ENCODE measurements at regions of chr10 and their contacts with region 1.

Region 1: GRCh38 chr10:35218339-35218955 is 91.8 kb downstream of the CREM start:
- DNase-seq: peak; percentile 61 to 92 (median 80)
- ATAC-seq: peak; percentile 90
- H3K4me3 ChIP-seq: no peak overlapping the region
- H3K4me3 Mint-ChIP-seq: no peak overlapping the region
- H3K27ac ChIP-seq: no peak overlapping the region
- H3K27ac Mint-ChIP-seq: no peak overlapping the region
- H3K4me1 ChIP-seq: peaks cover 3% of the 10 kb centered on the region
- H3K4me1 Mint-ChIP-seq: peaks cover 7% of the 10 kb centered on the region
- H3K27me3 ChIP-seq: no peaks in the 10 kb centered on the region
- H3K27me3 Mint-ChIP-seq: peaks cover 12% of the 10 kb centered on the region
- CTCF ChIP-seq: peak; percentile 94

Region 2: DNA sequence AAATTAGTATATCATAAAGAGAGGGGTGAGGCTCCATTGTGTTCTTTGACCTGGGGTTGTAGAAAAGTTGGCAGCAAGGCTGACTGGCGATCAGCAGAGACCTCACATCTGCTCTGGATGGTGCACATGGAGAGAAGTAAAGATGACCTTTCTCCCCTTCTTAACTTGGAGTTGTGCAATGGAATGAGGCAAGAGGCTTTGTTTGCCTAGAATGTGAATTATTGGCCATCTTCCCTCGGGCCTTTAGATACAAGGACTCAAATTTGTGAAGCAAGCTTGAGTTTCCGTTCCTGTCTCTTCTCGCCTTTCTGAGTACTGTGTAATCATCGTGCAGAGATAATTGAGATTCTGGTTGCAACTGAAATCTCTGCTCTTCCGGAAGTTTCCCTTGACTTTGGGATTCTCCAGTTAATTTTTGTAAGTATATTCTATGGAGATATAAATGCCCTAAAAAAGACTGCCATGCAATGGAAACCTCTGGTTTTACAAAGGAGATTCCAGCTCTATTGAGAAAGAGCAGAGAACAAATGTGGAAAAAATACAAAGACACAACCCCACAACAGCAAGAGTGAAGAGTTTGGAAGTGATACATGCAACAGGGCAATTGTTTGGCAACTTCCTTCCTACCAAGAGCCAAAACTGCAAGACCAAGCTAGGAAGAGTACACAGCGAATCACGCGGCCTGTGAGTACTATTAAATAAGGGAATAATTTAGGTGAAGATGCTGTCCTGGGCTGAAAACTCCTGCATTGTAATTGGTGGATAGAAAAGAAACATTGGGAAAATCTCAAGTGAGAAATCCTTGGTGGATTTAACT is 1341.7 kb before region 1 on chr10:
- CTCF ChIA-PET with region 1: no interaction called
- POLR2A ChIA-PET with region 1: no interaction called
- intact Hi-C with region 1: no loop called
- DNase-seq: no peak
- ATAC-seq: no peak
- H3K4me3 ChIP-seq: no peak overlapping the region
- H3K4me3 Mint-ChIP-seq: no peak overlapping the region
- H3K27ac ChIP-seq: no peak overlapping the region
- H3K27ac Mint-ChIP-seq: no peak overlapping the region
- H3K4me1 ChIP-seq: no peaks in the 10 kb centered on the region
- H3K4me1 Mint-ChIP-seq: no peaks in the 10 kb centered on the region
- H3K27me3 ChIP-seq: no peaks in the 10 kb centered on the region
- H3K27me3 Mint-ChIP-seq: no peaks in the 10 kb centered on the region
- CTCF ChIP-seq: no peak

Region 3: GRCh38 chr10:34655286-34656170 is 562.9 kb before region 1 on chr10:
- CTCF ChIA-PET with region 1: no interaction called
- POLR2A ChIA-PET with region 1: no interaction called
- intact Hi-C with region 1: loop called in 1 of 2 experiments (anchors 10 kb)
- DNase-seq: peak in 4 of 14 experiments; percentile 9 to 46 (median 26)
- ATAC-seq: no peak
- H3K4me3 ChIP-seq: no peak overlapping the region
- H3K4me3 Mint-ChIP-seq: no peak overlapping the region
- H3K27ac ChIP-seq: no peak overlapping the region
- H3K27ac Mint-ChIP-seq: no peak overlapping the region
- H3K4me1 ChIP-seq: no peaks in the 10 kb centered on the region
- H3K4me1 Mint-ChIP-seq: no peaks in the 10 kb centered on the region
- H3K27me3 ChIP-seq: no peaks in the 10 kb centered on the region
- H3K27me3 Mint-ChIP-seq: peaks cover 4% of the 10 kb centered on the region
- CTCF ChIP-seq: peak; percentile 36

Region 4: DNA sequence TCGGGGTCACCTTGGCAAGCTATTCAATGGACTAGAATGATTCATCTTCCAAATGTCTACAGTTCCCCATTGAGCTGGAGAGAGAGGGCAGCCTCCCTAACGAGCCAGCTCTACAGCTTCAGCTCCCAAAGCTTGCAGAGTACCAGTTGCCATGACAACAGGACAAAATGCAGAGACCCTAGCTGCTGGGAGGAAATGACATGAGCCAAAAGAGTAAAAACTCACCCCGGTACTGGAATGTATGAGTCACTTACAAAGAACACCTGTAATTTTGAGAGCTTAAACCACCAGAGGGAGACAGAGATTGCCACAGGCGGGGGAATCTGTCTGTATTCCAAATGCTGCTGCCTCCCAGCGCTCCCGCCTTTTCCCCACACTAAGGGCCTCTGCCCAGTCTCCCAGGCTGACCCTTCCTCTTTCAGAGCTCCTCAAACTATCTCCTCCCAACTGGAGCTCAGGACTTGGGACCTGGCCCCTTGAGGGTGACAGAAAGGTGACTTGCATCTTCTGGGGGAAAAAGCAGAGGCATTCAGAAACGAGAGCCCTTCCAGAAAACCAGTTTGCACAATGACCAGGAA is 223.8 kb before region 1 on chr10:
- CTCF ChIA-PET with region 1: interaction called, 5 read pairs
- POLR2A ChIA-PET with region 1: no interaction called
- intact Hi-C with region 1: loop called (anchors 1 to 2 kb)
- DNase-seq: peak; percentile 11 to 66 (median 36)
- ATAC-seq: peak; percentile 76
- H3K4me3 ChIP-seq: no peak overlapping the region
- H3K4me3 Mint-ChIP-seq: no peak overlapping the region
- H3K27ac ChIP-seq: no peak overlapping the region
- H3K27ac Mint-ChIP-seq: peak overlapping the region; percentile 31
- H3K4me1 ChIP-seq: peaks cover 8% of the 10 kb centered on the region
- H3K4me1 Mint-ChIP-seq: peaks cover 10% of the 10 kb centered on the region
- H3K27me3 ChIP-seq: no peaks in the 10 kb centered on the region
- H3K27me3 Mint-ChIP-seq: no peaks in the 10 kb centered on the region
- CTCF ChIP-seq: peak; percentile 69

Region 5: DNA sequence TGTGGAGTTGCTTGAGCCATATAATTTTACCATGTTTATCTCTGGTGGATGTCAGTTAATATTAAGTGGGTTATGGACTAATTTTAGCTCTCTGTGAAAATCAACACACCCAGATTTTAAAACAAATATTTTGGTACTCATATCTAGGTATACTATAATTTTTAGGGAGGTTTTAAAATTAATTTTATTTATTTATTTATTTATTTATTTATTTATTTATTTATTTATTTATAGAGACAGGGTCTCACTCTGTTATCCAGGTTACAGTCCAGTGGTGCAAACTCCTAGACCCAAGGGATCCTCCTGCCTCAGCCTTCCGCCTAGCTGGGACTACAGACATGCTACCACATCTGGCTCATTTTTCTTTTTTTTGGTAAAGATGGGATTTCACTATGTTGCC is 99.1 kb before region 1 on chr10:
- CTCF ChIA-PET with region 1: interaction called, 10 read pairs
- POLR2A ChIA-PET with region 1: interaction called, 3 read pairs
- intact Hi-C with region 1: loop called (anchors 1 kb)
- DNase-seq: no peak
- ATAC-seq: no peak
- H3K4me3 ChIP-seq: no peak overlapping the region
- H3K4me3 Mint-ChIP-seq: no peak overlapping the region
- H3K27ac ChIP-seq: no peak overlapping the region
- H3K27ac Mint-ChIP-seq: no peak overlapping the region
- H3K4me1 ChIP-seq: no peaks in the 10 kb centered on the region
- H3K4me1 Mint-ChIP-seq: no peaks in the 10 kb centered on the region
- H3K27me3 ChIP-seq: no peaks in the 10 kb centered on the region
- H3K27me3 Mint-ChIP-seq: no peaks in the 10 kb centered on the region
- CTCF ChIP-seq: no peak

Region 6: DNA sequence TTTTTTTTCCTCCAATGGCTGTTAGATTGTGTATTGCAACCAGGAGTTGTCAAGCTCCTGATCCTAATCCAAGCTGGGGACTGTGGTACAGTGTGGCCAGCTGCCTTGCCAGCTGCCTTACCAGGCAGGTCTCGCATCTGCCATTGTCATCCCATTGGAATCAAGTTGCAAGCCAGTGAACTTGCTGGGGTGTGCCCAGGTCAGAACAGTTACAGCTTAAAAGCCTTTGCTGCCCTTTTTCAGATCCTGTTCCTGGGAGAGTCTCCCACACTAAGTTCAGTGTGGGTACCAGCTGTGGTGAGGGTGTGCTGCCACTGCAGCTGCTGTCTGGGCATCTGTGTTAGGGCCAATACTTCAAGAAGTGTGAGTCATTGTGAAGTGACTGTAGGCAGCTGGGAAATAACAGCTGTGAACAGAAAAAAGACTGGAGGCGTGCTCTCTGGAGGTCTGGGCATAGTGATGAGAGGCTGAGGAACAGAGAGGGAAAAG is 190.7 kb after region 1 on chr10:
- CTCF ChIA-PET with region 1: no interaction called
- POLR2A ChIA-PET with region 1: no interaction called
- intact Hi-C with region 1: no loop called
- DNase-seq: peak in 3 of 14 experiments; percentile 20 to 31 (median 23)
- ATAC-seq: no peak
- H3K4me3 ChIP-seq: no peak overlapping the region
- H3K4me3 Mint-ChIP-seq: no peak overlapping the region
- H3K27ac ChIP-seq: no peak overlapping the region
- H3K27ac Mint-ChIP-seq: peak overlapping the region; percentile 1
- H3K4me1 ChIP-seq: peaks cover 25% of the 10 kb centered on the region
- H3K4me1 Mint-ChIP-seq: peaks cover 2% of the 10 kb centered on the region
- H3K27me3 ChIP-seq: no peaks in the 10 kb centered on the region
- H3K27me3 Mint-ChIP-seq: no peaks in the 10 kb centered on the region
- CTCF ChIP-seq: no peak

Measured in CD4-positive, alpha-beta T cell (primary cell).